A549 (cell line): ENCODE measurements at regions of chr12 and their contacts with region 1.

Region 1: GRCh38 chr12:3777206-3777809 is 24.4 kb upstream of the CRACR2A start:
- DNase-seq: peak; percentile 25 to 46
- ATAC-seq: peak; percentile 74 to 86; a peak in 5 of 6 replicates
- H3K4me3 ChIP-seq: no peak overlapping the region
- H3K27ac ChIP-seq: no peak overlapping the region
- H3K4me1 ChIP-seq: no peaks in the 10 kb centered on the region
- CTCF ChIP-seq: peak; percentile 58
- EP300 ChIP-seq: no peak
- POLR2A ChIP-seq: no peak
- RAD21 ChIP-seq: peak; percentile 63 to 81

Region 2: GRCh38 chr12:3307389-3307788 is 469.9 kb before region 1 on chr12:
- CTCF ChIA-PET with region 1: interaction called, 33 read pairs
- POLR2A ChIA-PET with region 1: no interaction called
- DNase-seq: no peak
- ATAC-seq: no peak
- H3K4me3 ChIP-seq: no peak overlapping the region
- H3K27ac ChIP-seq: no peak overlapping the region
- H3K4me1 ChIP-seq: 0 out of 3 replicates have a peak, but pooled peaks cover 3% of the 10 kb centered on the region
- CTCF ChIP-seq: no peak
- EP300 ChIP-seq: no peak
- POLR2A ChIP-seq: no peak
- RAD21 ChIP-seq: no peak

Region 3: GRCh38 chr12:3313675-3314663 is 463.3 kb before region 1 on chr12:
- CTCF ChIA-PET with region 1: interaction called, 33 read pairs
- POLR2A ChIA-PET with region 1: no interaction called
- DNase-seq: peak; percentile 52 to 55
- ATAC-seq: peak; percentile 79 to 92
- H3K4me3 ChIP-seq: no peak overlapping the region
- H3K27ac ChIP-seq: no peak overlapping the region
- H3K4me1 ChIP-seq: no peaks in the 10 kb centered on the region
- CTCF ChIP-seq: peak; percentile 35; the same call in 2 of the 3 replicates
- EP300 ChIP-seq: no peak
- POLR2A ChIP-seq: no peak
- RAD21 ChIP-seq: peak; percentile 31 to 52; a peak in 4 of 5 replicates

Region 4: DNA sequence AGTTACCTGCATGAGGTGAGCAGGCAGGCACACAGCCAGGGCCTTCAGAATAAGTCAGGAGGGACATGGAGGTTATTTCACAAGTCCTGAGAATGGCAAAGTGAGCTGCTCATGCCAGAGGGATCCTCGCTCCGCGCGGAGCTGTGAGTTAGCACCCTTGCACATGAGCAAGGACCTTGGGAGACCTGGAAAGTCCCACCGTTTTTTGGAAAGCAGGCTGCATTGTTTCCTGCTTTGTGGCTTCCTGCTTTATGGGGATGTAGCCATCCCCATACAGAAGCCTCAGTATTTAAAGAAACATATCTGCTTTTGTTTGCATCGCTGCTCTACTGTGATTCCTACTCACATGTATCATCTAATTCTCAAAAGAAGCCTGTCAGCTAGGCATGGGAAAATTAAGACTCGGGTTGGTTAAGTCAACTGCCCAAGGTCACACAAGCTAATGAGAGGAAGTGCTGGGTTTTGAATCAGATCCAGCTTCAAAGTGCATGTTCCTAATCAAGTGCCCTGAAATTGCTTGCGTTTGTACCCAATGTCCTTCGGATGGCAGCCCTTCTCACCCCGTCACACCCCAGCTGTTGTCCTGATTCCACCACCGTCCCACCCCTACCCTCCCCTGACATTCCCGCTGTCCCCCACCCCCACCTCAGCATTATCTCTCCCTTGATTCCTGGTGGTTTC is 130.6 kb before region 1 on chr12:
- CTCF ChIA-PET with region 1: no interaction called
- POLR2A ChIA-PET with region 1: no interaction called
- DNase-seq: no peak
- ATAC-seq: no peak
- H3K4me3 ChIP-seq: no peak overlapping the region
- H3K27ac ChIP-seq: no peak overlapping the region
- H3K4me1 ChIP-seq: 0 out of 3 replicates have a peak, but pooled peaks cover 3% of the 10 kb centered on the region
- CTCF ChIP-seq: no peak
- EP300 ChIP-seq: no peak
- POLR2A ChIP-seq: no peak
- RAD21 ChIP-seq: no peak

Region 5: DNA sequence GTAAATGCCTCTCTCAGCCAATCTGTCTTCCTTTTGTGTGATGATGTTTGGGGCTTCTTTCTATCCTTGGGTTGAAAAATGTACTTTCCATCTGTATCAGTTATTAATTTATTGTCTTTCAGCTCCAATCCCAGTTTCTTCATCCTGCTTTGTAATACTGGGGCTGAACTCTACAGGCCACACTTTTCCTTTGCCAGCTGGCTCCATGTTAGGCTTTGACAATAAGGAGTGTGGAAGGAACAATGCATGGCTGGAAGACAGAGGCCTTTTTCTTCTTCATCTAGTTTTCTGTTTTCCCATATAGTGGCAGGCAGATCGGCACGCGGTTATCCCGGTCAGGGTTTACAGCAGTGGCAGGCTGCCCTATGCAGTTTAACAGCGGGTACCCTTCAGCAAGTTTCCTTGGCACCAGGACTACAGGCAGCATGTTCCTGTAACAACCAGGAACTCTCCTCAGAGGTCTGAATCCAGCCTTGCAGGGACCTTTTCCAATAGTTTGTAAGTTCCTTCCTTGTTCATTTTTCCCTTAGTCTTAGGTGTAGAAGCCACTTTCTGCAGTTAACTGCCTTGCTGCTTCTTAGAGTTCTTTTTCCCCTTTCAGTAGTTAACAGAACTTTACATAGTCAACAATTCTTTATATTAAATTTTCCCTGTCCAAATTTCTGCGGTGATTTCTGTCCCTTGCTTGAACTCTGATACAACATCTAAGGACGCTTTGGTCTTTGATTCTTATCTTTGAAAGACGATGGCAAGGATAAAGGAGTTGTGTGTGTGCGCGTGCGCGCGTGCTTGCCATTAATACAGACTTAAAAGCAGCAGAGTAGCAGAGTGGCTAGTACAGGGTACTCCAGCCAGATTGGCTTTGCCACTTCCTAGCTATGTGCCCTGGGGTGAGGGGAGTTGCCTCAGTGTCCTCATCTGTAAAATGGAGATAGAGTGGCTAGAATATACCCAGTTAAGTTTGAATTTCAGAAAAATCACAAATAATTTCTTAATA is 14.2 kb after region 1 on chr12:
- CTCF ChIA-PET with region 1: interaction called, 14 read pairs
- POLR2A ChIA-PET with region 1: no interaction called
- DNase-seq: no peak
- ATAC-seq: no peak
- H3K4me3 ChIP-seq: no peak overlapping the region
- H3K27ac ChIP-seq: no peak overlapping the region
- H3K4me1 ChIP-seq: no peaks in the 10 kb centered on the region
- CTCF ChIP-seq: no peak
- EP300 ChIP-seq: no peak
- POLR2A ChIP-seq: no peak
- RAD21 ChIP-seq: no peak

Region 6: GRCh38 chr12:3797531-3798049 is 20.3 kb after region 1 on chr12:
- CTCF ChIA-PET with region 1: interaction called, 13 read pairs
- POLR2A ChIA-PET with region 1: no interaction called
- DNase-seq: no peak
- ATAC-seq: no peak
- H3K4me3 ChIP-seq: no peak overlapping the region
- H3K27ac ChIP-seq: no peak overlapping the region
- H3K4me1 ChIP-seq: no peaks in the 10 kb centered on the region
- CTCF ChIP-seq: no peak
- EP300 ChIP-seq: no peak
- POLR2A ChIP-seq: no peak
- RAD21 ChIP-seq: no peak

Region 7: GRCh38 chr12:4251216-4251891 is 474.0 kb after region 1 on chr12:
- CTCF ChIA-PET with region 1: no interaction called
- POLR2A ChIA-PET with region 1: no interaction called
- DNase-seq: no peak
- ATAC-seq: no peak
- H3K4me3 ChIP-seq: no peak overlapping the region
- H3K27ac ChIP-seq: no peak overlapping the region
- H3K4me1 ChIP-seq: no peaks in the 10 kb centered on the region
- CTCF ChIP-seq: no peak
- EP300 ChIP-seq: no peak
- POLR2A ChIP-seq: no peak
- RAD21 ChIP-seq: no peak